ENCODE measurements at regions of chr10 and their contacts with region 1.

Region 1: DNA sequence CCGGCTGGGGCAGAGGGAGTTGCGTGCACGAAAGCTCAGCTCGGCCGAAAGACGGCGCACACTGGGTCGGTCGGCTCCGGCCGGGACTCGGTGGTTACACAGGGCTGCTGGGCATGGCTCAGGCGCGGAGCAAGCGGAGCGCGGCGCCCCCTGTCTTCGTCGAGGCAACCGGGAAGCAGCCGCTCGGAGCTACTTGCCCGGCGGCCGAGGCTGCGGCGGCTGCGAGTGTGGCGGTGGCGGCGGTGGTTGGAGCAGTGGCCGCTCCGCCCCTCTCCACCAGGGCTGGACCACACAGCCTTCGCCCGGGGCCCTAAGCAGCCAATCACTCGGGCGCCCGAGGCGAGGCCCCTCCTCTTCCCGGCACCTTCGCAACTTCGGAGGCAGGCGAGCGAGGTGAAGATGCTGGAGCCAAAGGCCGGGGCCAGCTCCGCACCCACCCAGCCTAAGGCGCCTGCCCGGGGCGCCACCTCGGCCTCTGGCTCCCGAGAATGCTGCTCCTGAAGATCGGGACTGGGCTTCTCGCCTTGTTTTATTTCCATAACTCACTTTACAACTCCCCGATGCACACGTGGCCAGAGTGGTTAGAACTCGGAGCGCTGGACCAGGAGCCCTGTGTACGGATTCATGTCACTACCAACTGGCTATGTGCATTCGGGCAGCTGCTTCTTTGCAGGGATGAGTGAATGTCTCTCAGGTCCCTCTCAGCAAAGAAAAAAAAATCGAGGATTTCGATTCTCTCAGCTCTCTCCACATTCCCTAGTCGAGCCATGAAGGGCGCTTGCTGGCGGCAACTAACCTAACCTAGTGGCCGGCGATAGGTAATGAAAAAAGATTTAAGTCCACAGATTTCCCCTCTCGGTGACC is at the start of gene TLL2:
- DNase-seq: peak; percentile 86
- ATAC-seq: peak; percentile 91
- H3K4me3 ChIP-seq: peak within 1 kb of the TSS; percentile 48
- H3K27ac ChIP-seq: no peak within 1 kb of the TSS
- H3K4me1 ChIP-seq: peaks cover 23% of the 10 kb centered on the region
- H3K27me3 ChIP-seq: peaks cover 23% of the 10 kb centered on the region
- CTCF ChIP-seq: peak; percentile 58
- total RNA-seq, gene TLL2: not detected

Region 2: DNA sequence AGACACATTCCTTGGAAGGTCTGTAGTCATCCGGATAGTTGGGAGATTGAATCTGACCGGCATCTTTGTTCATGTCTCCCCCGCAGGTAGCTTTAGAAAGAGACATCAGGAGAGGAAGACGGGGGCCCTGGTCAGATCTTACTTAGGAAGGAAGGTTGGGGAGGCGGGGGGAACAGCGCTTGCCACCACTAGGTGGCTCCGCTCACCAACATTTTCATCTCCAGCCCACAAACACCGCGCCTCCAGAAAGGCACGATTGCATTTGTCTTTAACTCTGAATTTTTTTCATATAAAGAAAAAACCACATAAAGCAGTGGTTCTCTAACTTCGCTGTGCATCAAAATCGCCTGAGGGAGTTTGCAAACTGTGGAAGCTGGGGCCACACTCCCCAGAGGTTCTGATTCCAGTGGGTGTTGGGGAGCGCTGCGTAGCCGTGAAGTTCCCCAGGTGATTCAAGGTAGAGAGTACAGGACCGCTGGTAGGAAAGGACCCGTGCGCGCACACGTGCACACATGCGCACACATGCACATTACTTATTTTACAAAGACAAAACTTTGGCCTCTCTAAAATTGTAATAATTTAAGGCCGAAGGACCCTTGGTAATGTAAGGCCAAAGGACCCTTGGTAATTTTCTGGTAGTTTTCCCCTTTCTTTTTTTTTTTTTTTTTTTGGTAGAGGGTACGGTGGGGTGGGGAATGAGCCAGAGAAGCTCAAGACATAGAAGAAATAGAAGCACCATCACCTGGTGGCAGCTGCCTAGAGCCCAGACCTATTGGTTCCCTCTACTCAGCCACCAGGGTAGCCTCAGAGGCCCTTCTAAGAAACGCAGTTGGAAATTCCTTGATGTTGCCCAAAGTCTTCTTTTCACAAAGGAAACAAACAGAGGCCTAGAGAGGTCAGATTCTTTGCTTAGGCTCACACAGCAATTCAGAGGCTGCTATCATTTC is 117.7 kb before region 1 on chr10:
- intact Hi-C with region 1: loop called (anchors 10 kb)
- DNase-seq: peak; percentile 77
- ATAC-seq: peak; percentile 89
- H3K4me3 ChIP-seq: no peak overlapping the region
- H3K27ac ChIP-seq: no peak overlapping the region
- H3K4me1 ChIP-seq: no peaks in the 10 kb centered on the region
- H3K27me3 ChIP-seq: no peaks in the 10 kb centered on the region
- CTCF ChIP-seq: peak; percentile 84